ENCODE measurements at regions of chr3 and their contacts with region 1.

Region 1: DNA sequence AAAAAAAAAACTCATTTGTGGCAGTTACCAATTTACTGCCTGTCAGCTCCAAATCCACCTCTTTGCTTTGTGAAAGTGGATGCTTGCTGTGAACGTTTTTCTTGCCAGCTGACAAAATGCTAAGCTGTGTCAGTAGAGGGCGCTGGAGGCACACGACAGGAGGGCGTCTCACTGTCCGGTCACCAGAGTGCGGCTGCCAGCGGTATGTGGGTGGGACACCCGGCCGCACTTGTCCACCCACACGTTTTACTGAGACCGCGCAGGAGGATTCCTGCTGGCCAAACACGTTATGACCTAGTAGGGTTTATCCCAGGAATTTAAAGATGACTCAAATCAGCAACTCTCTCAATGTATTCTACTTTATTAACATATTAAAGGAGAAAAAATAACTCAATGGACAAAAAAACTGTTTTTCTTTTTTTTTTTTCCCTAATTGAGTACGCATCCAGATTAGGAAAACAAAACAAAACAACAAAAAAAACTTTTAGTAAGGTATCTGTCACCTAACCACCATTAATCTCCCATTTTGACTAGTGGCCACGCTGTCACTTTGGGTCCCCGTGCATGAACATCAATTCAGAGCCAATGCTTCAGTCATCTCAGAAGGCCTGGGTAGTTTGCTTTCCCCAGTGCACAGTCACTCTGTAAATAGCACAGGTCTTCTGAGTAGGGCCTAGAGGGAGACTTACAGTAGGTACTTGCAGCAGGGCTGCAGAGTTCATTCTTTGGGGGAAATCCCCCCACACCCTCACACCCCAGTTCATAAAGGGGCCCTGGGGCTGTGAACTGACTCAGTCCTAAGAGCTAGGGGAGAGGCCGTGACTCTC is 43.8 kb upstream of the RPL35A start:
- DNase-seq: peak; percentile 25
- ATAC-seq: peak; percentile 96
- H3K4me3 ChIP-seq: no peak overlapping the region
- H3K27ac ChIP-seq: no peak overlapping the region
- H3K4me1 ChIP-seq: peaks cover 7% of the 10 kb centered on the region; the same call in 1 of the 2 replicates
- H3K27me3 ChIP-seq: no peaks in the 10 kb centered on the region
- CTCF ChIP-seq: peak; percentile 90 to 95 (median 91)
- EP300 ChIP-seq: peak; percentile 16 to 17; a peak in 1 of 4 replicates
- POLR2A ChIP-seq: no peak
- RAD21 ChIP-seq: peak; percentile 93

Region 2: GRCh38 chr3:197591816-197592215 is 314.4 kb before region 1 on chr3:
- CTCF ChIA-PET with region 1: no interaction called
- POLR2A ChIA-PET with region 1: no interaction called
- RAD21 ChIA-PET with region 1: no interaction called
- SMC1A ChIA-PET with region 1: no interaction called
- in situ Hi-C with region 1: no loop called
- intact Hi-C with region 1: no loop called
- DNase-seq: no peak
- ATAC-seq: peak; percentile 48
- H3K4me3 ChIP-seq: no peak overlapping the region
- H3K27ac ChIP-seq: no peak overlapping the region
- H3K4me1 ChIP-seq: no peaks in the 10 kb centered on the region
- H3K27me3 ChIP-seq: no peaks in the 10 kb centered on the region
- CTCF ChIP-seq: no peak
- EP300 ChIP-seq: no peak
- POLR2A ChIP-seq: no peak
- RAD21 ChIP-seq: no peak

Region 3: DNA sequence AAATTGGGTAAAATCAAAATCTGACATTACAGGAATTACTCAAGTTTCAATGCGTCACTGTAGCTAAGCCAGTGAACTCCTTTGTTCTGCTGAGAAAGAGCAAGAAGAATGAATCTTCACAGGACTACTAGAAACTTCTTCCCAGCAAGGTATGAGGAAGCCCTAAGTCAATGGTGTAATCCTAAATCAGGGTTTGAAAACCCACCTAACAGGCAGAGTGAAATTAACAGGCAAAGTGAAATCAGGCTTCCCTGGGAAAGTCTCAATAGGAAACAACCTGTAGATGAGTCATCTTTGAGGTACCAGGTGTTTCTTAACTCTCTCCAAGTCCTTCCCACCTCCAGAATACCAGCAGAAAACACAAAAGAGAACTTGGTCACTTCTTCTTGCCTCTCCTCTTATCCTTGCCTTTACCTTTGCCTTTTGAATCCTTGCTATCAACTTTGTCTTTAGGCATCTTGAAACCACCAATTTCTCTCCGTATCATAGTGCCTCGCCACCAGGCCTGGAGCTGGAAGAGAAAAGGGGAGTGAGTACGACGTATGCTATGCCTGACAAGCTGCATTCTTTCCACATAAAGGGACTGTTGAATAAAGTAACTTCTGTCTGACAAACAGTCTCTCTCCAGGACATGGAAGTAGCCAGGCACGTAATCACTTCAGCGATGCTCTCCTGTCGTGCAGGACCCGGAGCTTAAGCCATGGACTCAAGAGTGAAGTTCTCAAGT is 16.9 kb before region 1 on chr3:
- CTCF ChIA-PET with region 1: interaction called, 27 read pairs
- POLR2A ChIA-PET with region 1: no interaction called
- RAD21 ChIA-PET with region 1: no interaction called
- SMC1A ChIA-PET with region 1: interaction called, 4 read pairs
- in situ Hi-C with region 1: no loop called
- intact Hi-C with region 1: no loop called
- DNase-seq: no peak
- ATAC-seq: no peak
- H3K4me3 ChIP-seq: no peak overlapping the region
- H3K27ac ChIP-seq: no peak overlapping the region
- H3K4me1 ChIP-seq: no peaks in the 10 kb centered on the region
- H3K27me3 ChIP-seq: no peaks in the 10 kb centered on the region
- CTCF ChIP-seq: no peak
- EP300 ChIP-seq: no peak
- POLR2A ChIP-seq: no peak
- RAD21 ChIP-seq: no peak

Region 4: DNA sequence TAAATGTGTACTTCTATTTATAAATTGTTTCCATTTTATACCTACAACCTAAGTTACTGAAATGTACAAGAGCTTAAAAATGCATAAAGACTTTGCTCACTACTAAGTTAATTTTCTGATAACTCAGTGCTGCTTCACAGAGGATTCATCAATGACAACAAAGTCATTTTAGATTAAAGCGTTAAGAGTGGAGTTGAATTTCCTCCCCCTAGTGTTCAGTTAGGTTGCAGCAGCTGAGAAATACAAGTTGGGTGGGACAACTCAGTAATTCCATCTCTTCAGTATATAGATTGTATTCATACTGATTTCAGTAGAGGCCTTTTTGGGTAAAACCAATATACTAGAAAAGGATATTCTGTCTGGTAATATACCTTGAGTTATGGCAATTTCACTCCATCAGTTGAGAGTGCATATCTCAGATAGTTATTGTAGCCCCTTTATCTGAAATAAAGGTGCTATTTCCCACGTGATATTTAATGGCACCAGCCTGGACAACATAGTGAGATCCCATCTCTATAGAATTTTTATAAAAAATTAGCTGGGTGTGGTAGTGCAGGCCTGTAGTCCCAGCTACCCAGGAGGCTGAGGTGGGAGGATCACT is 36.8 kb after region 1 on chr3:
- CTCF ChIA-PET with region 1: interaction called, 71 read pairs
- POLR2A ChIA-PET with region 1: interaction called, 4 read pairs
- RAD21 ChIA-PET with region 1: interaction called, 20 read pairs
- SMC1A ChIA-PET with region 1: interaction called, 14 read pairs
- in situ Hi-C with region 1: no loop called
- intact Hi-C with region 1: loop called (anchors 1 kb)
- DNase-seq: no peak
- ATAC-seq: peak; percentile 86
- H3K4me3 ChIP-seq: no peak overlapping the region
- H3K27ac ChIP-seq: no peak overlapping the region
- H3K4me1 ChIP-seq: no peaks in the 10 kb centered on the region
- H3K27me3 ChIP-seq: no peaks in the 10 kb centered on the region
- CTCF ChIP-seq: peak; percentile 63 to 78 (median 71)
- EP300 ChIP-seq: no peak
- POLR2A ChIP-seq: no peak
- RAD21 ChIP-seq: peak; percentile 66

Region 5: GRCh38 chr3:197949754-197950660 is 43.8 kb after region 1 on chr3 and contains the start of gene RPL35A:
- CTCF ChIA-PET with region 1: interaction called, 71 read pairs
- POLR2A ChIA-PET with region 1: no interaction called
- RAD21 ChIA-PET with region 1: no interaction called
- SMC1A ChIA-PET with region 1: interaction called, 7 read pairs
- in situ Hi-C with region 1: no loop called
- intact Hi-C with region 1: no loop called
- DNase-seq: peak; percentile 98
- ATAC-seq: peak; percentile 89
- H3K4me3 ChIP-seq: peak within 1 kb of the TSS; percentile 95
- H3K27ac ChIP-seq: peak within 1 kb of the TSS; percentile 95
- H3K4me1 ChIP-seq: peaks cover 3% of the 10 kb centered on the region; the same call in 1 of the 2 replicates
- H3K27me3 ChIP-seq: no peaks in the 10 kb centered on the region
- CTCF ChIP-seq: no peak
- EP300 ChIP-seq: peak in 1 of 2 experiments; percentile 62; a peak in 2 of 4 replicates
- POLR2A ChIP-seq: peak; percentile 98
- RAD21 ChIP-seq: no peak
- polyA plus RNA-seq, gene RPL35A: 2,763 to 3,144 TPM

Region 6: GRCh38 chr3:198061119-198062067 is 155.2 kb after region 1 on chr3:
- CTCF ChIA-PET with region 1: interaction called, 3 read pairs
- POLR2A ChIA-PET with region 1: no interaction called
- RAD21 ChIA-PET with region 1: no interaction called
- SMC1A ChIA-PET with region 1: no interaction called
- in situ Hi-C with region 1: no loop called
- intact Hi-C with region 1: loop called (anchors 5 kb)
- DNase-seq: no peak
- ATAC-seq: no peak
- H3K4me3 ChIP-seq: no peak overlapping the region
- H3K27ac ChIP-seq: no peak overlapping the region
- H3K4me1 ChIP-seq: no peaks in the 10 kb centered on the region
- H3K27me3 ChIP-seq: no peaks in the 10 kb centered on the region; a peak in 1 of 4 replicates
- CTCF ChIP-seq: no peak
- EP300 ChIP-seq: no peak
- POLR2A ChIP-seq: no peak
- RAD21 ChIP-seq: no peak